Heart left ventricle (tissue), 16 donors: ENCODE measurements at regions of chr16 and their contacts with region 1.

Region 1: GRCh38 chr16:13873835-13874438 is 46.0 kb upstream of the ERCC4 start:
- DNase-seq: no peak
- ATAC-seq: no peak
- H3K4me3 ChIP-seq: no peak overlapping the region
- H3K27ac ChIP-seq: no peak overlapping the region
- H3K4me1 ChIP-seq: peaks cover 0 to 3% (median 0%) of the 10 kb centered on the region in 12 donors
- H3K27me3 ChIP-seq: peaks cover 0 to 3% (median 0%) of the 10 kb centered on the region in 9 donors
- CTCF ChIP-seq: peak in 10 of 12 donors; percentile 28 to 58 (median 44)
- POLR2A ChIP-seq: no peak

Region 2: GRCh38 chr16:12406926-12407690 is 1466.8 kb before region 1 on chr16:
- intact Hi-C with region 1: no loop called
- DNase-seq: no peak
- ATAC-seq: no peak
- H3K4me3 ChIP-seq: no peak overlapping the region
- H3K27ac ChIP-seq: no peak overlapping the region
- H3K4me1 ChIP-seq: no peaks in the 10 kb centered on the region
- H3K27me3 ChIP-seq: no peaks in the 10 kb centered on the region
- CTCF ChIP-seq: no peak
- POLR2A ChIP-seq: no peak

Region 3: GRCh38 chr16:13742928-13743327 is 131.0 kb before region 1 on chr16:
- intact Hi-C with region 1: loop called in 5 of 10 experiments (anchors 5 to 10 kb)
- DNase-seq: no peak
- ATAC-seq: no peak
- H3K4me3 ChIP-seq: no peak overlapping the region
- H3K27ac ChIP-seq: no peak overlapping the region
- H3K4me1 ChIP-seq: no peaks in the 10 kb centered on the region
- H3K27me3 ChIP-seq: no peaks in the 10 kb centered on the region
- CTCF ChIP-seq: no peak
- POLR2A ChIP-seq: no peak

Region 4: GRCh38 chr16:13992976-13993375 is 119.0 kb after region 1 on chr16:
- intact Hi-C with region 1: no loop called
- DNase-seq: no peak
- ATAC-seq: no peak
- H3K4me3 ChIP-seq: no peak overlapping the region
- H3K27ac ChIP-seq: peak overlapping the region in 2 of 12 donors; percentile 34 to 89
- H3K4me1 ChIP-seq: peaks cover 0 to 24% (median 15%) of the 10 kb centered on the region in 12 donors
- H3K27me3 ChIP-seq: no peaks in the 10 kb centered on the region
- CTCF ChIP-seq: no peak
- POLR2A ChIP-seq: no peak